ENCODE measurements at regions of chr6 and their contacts with region 1.

Region 1: DNA sequence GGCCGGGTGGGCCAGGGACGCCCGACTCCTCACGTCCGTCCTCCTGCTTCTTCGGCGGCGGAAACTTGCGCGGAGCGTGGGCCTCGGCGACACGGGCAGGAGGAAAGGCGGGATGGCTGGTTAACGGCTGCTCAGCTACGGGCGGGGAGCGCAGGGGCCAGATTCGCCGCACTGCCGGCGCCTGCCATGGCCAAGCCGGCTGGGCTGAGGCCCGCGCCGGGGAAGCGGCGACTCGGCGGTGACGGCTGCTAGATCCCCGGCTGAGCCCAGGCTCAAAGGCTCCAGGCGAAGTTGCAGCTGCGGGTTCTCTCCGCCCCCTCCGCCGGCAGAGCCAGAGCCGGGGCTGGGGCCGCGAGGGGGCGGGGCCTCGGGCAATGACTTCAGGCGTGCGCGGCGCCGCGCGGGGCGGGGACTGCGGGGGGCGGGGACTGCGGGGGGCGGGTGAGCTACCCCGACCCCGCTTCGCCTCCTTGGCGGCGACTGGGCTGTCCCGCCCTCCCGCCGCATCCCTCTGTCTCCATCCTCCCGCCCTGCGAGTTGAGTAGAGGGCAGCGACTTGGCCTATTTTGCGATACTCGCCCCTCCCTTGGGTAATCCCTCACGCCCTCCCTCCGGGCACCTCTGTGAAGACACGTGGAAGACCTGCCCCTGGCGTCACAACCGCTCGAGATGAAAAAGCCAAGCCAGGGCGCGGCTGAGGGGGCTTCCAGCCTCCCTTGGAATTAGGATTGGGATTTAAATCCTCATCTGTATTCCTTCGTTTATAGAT is at the start of gene CEP85L:
- DNase-seq: peak; percentile 96
- ATAC-seq: peak; percentile 93
- H3K4me3 Mint-ChIP-seq: peak within 1 kb of the TSS; percentile 85
- H3K27ac Mint-ChIP-seq: peak within 1 kb of the TSS; percentile 94
- H3K4me1 Mint-ChIP-seq: peaks cover 50% of the 10 kb centered on the region
- H3K27me3 Mint-ChIP-seq: no peaks in the 10 kb centered on the region
- total RNA-seq, gene CEP85L: 29.5 to 29.7 TPM

Region 2: DNA sequence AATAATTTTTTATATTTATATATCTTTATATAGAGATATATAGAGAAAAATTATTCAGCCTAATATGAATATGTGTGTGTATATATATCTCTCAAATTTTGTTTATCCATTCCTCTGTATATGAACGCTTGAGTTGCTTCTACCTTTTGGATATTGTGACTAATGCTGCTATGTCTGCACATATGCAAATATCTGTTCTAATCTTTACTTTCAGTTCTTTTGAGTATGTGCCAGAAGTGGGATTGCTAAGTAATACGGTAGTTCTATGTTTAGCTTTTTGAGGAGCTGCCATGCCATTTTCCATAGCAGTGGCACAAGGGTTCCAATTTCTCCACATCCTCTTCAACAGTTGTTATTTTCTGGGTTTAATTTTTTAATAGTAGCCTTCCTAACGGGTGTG is 72.7 kb after region 1 on chr6:
- CTCF ChIA-PET with region 1: interaction called, 5 read pairs
- POLR2A ChIA-PET with region 1: interaction called, 6 read pairs
- intact Hi-C with region 1: loop called (anchors 1 to 2 kb)
- DNase-seq: no peak
- ATAC-seq: peak; percentile 37
- H3K4me3 Mint-ChIP-seq: no peak overlapping the region
- H3K27ac Mint-ChIP-seq: peak overlapping the region; percentile 70
- H3K4me1 Mint-ChIP-seq: peaks cover 75% of the 10 kb centered on the region
- H3K27me3 Mint-ChIP-seq: no peaks in the 10 kb centered on the region

Region 3: GRCh38 chr6:118934461-118935330 is 283.2 kb after region 1 on chr6 and contains the start of gene MCM9:
- CTCF ChIA-PET with region 1: no interaction called
- POLR2A ChIA-PET with region 1: no interaction called
- intact Hi-C with region 1: loop called (anchors 1 kb)
- DNase-seq: peak; percentile 94
- ATAC-seq: peak; percentile 97
- H3K4me3 Mint-ChIP-seq: peak within 1 kb of the TSS; percentile 87
- H3K27ac Mint-ChIP-seq: peak within 1 kb of the TSS; percentile 94
- H3K4me1 Mint-ChIP-seq: peaks cover 35% of the 10 kb centered on the region
- H3K27me3 Mint-ChIP-seq: no peaks in the 10 kb centered on the region
- total RNA-seq, gene MCM9: 17.0 to 17.2 TPM

Measured in activated CD4-positive, alpha-beta T cell treated with anti-CD3 and anti-CD28 coated beads for 36 hours (primary cell).